ENCODE measurements at regions of chr10 and their contacts with region 1.

Region 1: GRCh38 chr10:7471720-7472367 is 61.0 kb upstream of the SFMBT2 start:
- DNase-seq: peak; percentile 98
- ATAC-seq: peak; percentile 87
- H3K4me3 ChIP-seq: peak overlapping the region; percentile 51; the same call in 1 of the 2 replicates
- H3K27ac ChIP-seq: peak overlapping the region; percentile 88
- H3K4me1 ChIP-seq: peaks cover 67% of the 10 kb centered on the region
- H3K27me3 ChIP-seq: no peaks in the 10 kb centered on the region
- CTCF ChIP-seq: no peak
- EP300 ChIP-seq: peak; percentile 100
- POLR2A ChIP-seq: peak; percentile 51
- RAD21 ChIP-seq: 0 out of 2 replicates have a peak, but pooled peaks have one; percentile 10

Region 2: DNA sequence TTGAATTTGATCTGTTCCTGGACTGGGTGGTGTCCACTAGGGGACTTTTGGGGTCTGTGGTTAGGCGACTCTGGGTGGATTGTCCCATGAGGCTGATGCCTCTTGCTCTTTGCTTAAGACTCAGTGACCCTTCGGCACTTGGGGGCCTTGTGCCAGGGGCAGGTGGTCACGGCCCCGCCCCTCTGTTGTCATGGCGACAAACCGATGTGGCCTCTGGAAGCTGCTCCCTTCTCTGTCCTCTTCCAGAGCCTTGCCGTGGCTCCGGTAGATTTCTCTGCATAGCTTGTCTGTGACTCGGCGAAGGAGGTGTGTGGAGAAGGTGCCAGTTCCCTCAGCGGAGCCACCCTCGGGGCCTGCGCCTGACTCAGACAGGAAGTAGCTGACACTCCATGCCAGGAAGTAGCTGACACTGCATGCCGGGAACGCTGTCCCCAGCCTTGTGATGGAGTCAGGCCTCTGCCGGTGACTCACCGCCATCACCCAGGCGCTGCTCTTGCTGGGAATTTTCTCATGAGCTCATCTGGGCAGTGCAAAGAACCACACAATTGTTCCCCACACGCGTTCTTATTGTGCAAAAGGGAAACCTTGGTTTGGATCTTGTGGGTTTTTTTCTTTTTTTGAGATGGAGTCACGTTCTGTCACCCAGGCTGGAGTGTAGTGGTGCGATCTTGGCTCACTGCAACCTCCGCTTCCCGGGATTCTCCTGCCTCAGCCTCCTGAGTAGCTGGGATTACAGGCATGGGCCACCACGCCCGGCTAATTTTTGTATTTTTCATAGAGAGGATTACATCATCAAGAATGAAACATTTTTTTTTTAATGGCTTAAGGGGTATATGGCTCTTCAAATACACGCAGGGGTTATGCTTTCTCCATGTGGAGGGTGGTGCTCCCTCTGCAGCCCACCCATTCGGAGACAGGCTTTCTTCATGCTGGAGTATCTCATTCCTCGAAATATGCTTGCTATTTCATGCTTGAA is 1196.5 kb before region 1 on chr10:
- CTCF ChIA-PET with region 1: no interaction called
- POLR2A ChIA-PET with region 1: no interaction called
- RAD21 ChIA-PET with region 1: no interaction called
- SMC1A ChIA-PET with region 1: no interaction called
- in situ Hi-C with region 1: no loop called
- intact Hi-C with region 1: loop called (anchors 10 kb)
- DNase-seq: peak; percentile 49
- ATAC-seq: peak; percentile 77
- H3K4me3 ChIP-seq: peak overlapping the region; percentile 10; the same call in 1 of the 2 replicates
- H3K27ac ChIP-seq: peak overlapping the region; percentile 51
- H3K4me1 ChIP-seq: peaks cover 28% of the 10 kb centered on the region
- H3K27me3 ChIP-seq: peaks cover 0 to 1% of the 10 kb centered on the region in 2 experiments; a peak in 1 of 4 replicates
- CTCF ChIP-seq: 0 out of 6 replicates have a peak, but pooled peaks of 1 of the 3 experiments have one; percentile 2
- EP300 ChIP-seq: 0 out of 4 replicates have a peak, but pooled peaks have one; percentile 51 to 52
- POLR2A ChIP-seq: peak; percentile 77
- RAD21 ChIP-seq: peak; percentile 10; the same call in 1 of the 2 replicates

Region 3: GRCh38 chr10:7184660-7185366 is 287.0 kb before region 1 on chr10:
- CTCF ChIA-PET with region 1: no interaction called
- POLR2A ChIA-PET with region 1: no interaction called
- RAD21 ChIA-PET with region 1: no interaction called
- SMC1A ChIA-PET with region 1: no interaction called
- in situ Hi-C with region 1: no loop called
- intact Hi-C with region 1: no loop called
- DNase-seq: peak; percentile 59
- ATAC-seq: no peak
- H3K4me3 ChIP-seq: no peak overlapping the region
- H3K27ac ChIP-seq: peak overlapping the region; percentile 78
- H3K4me1 ChIP-seq: peaks cover 6% of the 10 kb centered on the region; the same call in 1 of the 2 replicates
- H3K27me3 ChIP-seq: no peaks in the 10 kb centered on the region
- CTCF ChIP-seq: no peak
- EP300 ChIP-seq: no peak
- POLR2A ChIP-seq: no peak
- RAD21 ChIP-seq: no peak

Region 4: DNA sequence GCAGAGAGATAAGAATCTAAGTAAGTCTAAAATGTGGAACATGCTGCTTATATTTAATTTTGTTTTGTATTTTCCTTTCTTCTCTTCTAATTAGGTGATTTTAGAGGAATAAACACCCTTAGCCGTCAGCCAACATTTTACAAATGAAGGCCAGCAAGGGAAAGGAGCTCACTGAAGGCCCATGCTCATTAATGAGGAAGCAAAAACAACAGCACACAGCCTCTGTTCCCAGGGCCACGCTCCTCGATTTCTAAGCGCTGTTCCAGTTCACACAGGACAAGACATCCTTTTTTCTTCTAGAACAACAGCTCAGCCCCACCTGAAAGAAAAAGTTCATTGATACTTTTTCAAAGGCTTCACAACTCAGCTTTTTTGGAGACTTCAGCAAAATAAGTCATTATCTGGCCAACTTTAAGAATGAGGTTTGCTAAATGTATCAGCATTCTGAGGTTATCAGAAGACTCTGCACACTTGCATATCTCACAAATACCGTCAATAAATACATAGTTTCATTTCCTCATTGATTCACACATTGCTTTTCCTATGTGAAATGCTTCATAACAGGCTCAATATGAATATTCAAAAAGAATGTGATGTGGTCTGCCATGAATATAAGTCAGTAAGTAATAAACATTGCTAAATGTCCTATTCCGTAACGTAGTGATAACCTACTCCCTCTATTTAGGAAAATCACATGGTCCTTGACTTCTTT is 26.2 kb before region 1 on chr10:
- CTCF ChIA-PET with region 1: interaction called, 3 read pairs
- POLR2A ChIA-PET with region 1: interaction called, 3 read pairs
- RAD21 ChIA-PET with region 1: interaction called, 7 read pairs
- SMC1A ChIA-PET with region 1: interaction called, 7 read pairs
- in situ Hi-C with region 1: no loop called
- intact Hi-C with region 1: loop called (anchors 2 kb)
- DNase-seq: no peak
- ATAC-seq: peak; percentile 90
- H3K4me3 ChIP-seq: no peak overlapping the region
- H3K27ac ChIP-seq: peak overlapping the region; percentile 85
- H3K4me1 ChIP-seq: peaks cover 21% of the 10 kb centered on the region
- H3K27me3 ChIP-seq: no peaks in the 10 kb centered on the region
- CTCF ChIP-seq: no peak
- EP300 ChIP-seq: peak; percentile 8 to 69; a peak in 3 of 4 replicates
- POLR2A ChIP-seq: no peak
- RAD21 ChIP-seq: no peak

Region 5: GRCh38 chr10:7457478-7458316 is 14.1 kb before region 1 on chr10:
- CTCF ChIA-PET with region 1: interaction called, 4 read pairs
- POLR2A ChIA-PET with region 1: interaction called, 3 read pairs
- RAD21 ChIA-PET with region 1: interaction called, 4 read pairs
- SMC1A ChIA-PET with region 1: interaction called, 9 read pairs
- in situ Hi-C with region 1: no loop called
- intact Hi-C with region 1: loop called (anchors 1 kb)
- DNase-seq: peak; percentile 72
- ATAC-seq: peak; percentile 94
- H3K4me3 ChIP-seq: peak overlapping the region; percentile 7; the same call in 1 of the 2 replicates
- H3K27ac ChIP-seq: peak overlapping the region; percentile 61
- H3K4me1 ChIP-seq: peaks cover 17% of the 10 kb centered on the region
- H3K27me3 ChIP-seq: no peaks in the 10 kb centered on the region
- CTCF ChIP-seq: no peak
- EP300 ChIP-seq: peak; percentile 86 to 89; a peak in 3 of 4 replicates
- POLR2A ChIP-seq: no peak
- RAD21 ChIP-seq: no peak

Region 6: GRCh38 chr10:7484456-7485243 is 12.8 kb after region 1 on chr10:
- CTCF ChIA-PET with region 1: interaction called, 9 read pairs
- POLR2A ChIA-PET with region 1: interaction called, 12 read pairs
- RAD21 ChIA-PET with region 1: interaction called, 23 read pairs
- SMC1A ChIA-PET with region 1: interaction called, 29 read pairs
- in situ Hi-C with region 1: no loop called
- intact Hi-C with region 1: no loop called
- DNase-seq: peak; percentile 91
- ATAC-seq: peak; percentile 81
- H3K4me3 ChIP-seq: peak overlapping the region; percentile 53
- H3K27ac ChIP-seq: peak overlapping the region; percentile 75
- H3K4me1 ChIP-seq: peaks cover 47% of the 10 kb centered on the region
- H3K27me3 ChIP-seq: no peaks in the 10 kb centered on the region
- CTCF ChIP-seq: no peak
- EP300 ChIP-seq: peak; percentile 78 to 96
- POLR2A ChIP-seq: peak; percentile 30; the same call in 1 of the 2 replicates
- RAD21 ChIP-seq: no peak

Region 7: DNA sequence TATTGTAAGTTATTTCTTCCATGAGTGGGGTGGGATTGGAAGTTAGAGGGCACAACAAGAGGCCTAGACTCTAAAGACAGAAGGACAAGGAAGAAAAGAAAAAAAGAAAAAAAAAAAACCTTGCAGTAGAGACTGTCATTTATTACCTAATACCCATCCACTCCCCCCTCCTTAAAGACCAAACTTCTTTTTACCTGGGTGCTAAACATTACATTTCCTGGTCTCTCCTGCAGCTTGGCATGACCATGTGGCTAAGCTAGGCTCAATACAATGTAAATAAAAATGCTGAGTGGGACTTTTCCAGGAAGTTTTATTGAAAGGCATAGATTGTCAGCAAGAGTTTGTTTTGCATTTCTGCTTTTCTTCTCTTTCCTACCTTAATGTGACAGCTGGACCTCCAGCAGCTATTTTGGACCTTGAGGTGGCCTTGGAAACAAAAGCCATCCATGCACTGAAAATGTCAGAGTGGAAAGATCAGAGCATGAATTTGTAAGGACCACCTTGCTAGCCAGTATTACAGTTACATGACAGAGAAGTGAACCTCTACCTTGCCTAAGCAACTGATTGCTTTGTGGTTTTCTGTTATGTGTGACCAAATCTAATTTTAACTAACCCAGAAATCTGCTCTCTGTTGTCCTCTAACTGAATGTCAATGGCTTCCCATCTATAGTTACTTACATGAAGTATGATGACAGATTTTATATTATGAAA is 20.3 kb after region 1 on chr10:
- CTCF ChIA-PET with region 1: interaction called, 16 read pairs
- POLR2A ChIA-PET with region 1: interaction called, 10 read pairs
- RAD21 ChIA-PET with region 1: interaction called, 23 read pairs
- SMC1A ChIA-PET with region 1: interaction called, 26 read pairs
- in situ Hi-C with region 1: no loop called
- intact Hi-C with region 1: loop called (anchors 2 kb)
- DNase-seq: peak; percentile 74
- ATAC-seq: peak; percentile 91
- H3K4me3 ChIP-seq: peak overlapping the region; percentile 41; the same call in 1 of the 2 replicates
- H3K27ac ChIP-seq: peak overlapping the region; percentile 80
- H3K4me1 ChIP-seq: peaks cover 37% of the 10 kb centered on the region
- H3K27me3 ChIP-seq: no peaks in the 10 kb centered on the region
- CTCF ChIP-seq: no peak
- EP300 ChIP-seq: 0 out of 4 replicates have a peak, but pooled peaks of 1 of the 2 experiments have one; percentile 57
- POLR2A ChIP-seq: no peak
- RAD21 ChIP-seq: no peak

Region 8: GRCh38 chr10:8073691-8074391 is 602.0 kb after region 1 on chr10:
- CTCF ChIA-PET with region 1: no interaction called
- POLR2A ChIA-PET with region 1: no interaction called
- RAD21 ChIA-PET with region 1: no interaction called
- SMC1A ChIA-PET with region 1: no interaction called
- in situ Hi-C with region 1: no loop called
- intact Hi-C with region 1: no loop called
- DNase-seq: no peak
- ATAC-seq: no peak
- H3K4me3 ChIP-seq: no peak overlapping the region
- H3K27ac ChIP-seq: no peak overlapping the region
- H3K4me1 ChIP-seq: peaks cover 7% of the 10 kb centered on the region
- H3K27me3 ChIP-seq: no peaks in the 10 kb centered on the region
- CTCF ChIP-seq: no peak
- EP300 ChIP-seq: no peak
- POLR2A ChIP-seq: no peak
- RAD21 ChIP-seq: no peak